Heart left ventricle (tissue), 16 donors: ENCODE measurements at regions of chr3 and their contacts with region 1.

Region 1: GRCh38 chr3:134406331-134407238 is 32.3 kb upstream of the AMOTL2 start:
- DNase-seq: peak; percentile 61 to 75 (median 66)
- ATAC-seq: peak in 3 of 4 donors; percentile 68 to 80 (median 68)
- H3K4me3 ChIP-seq: peak overlapping the region; percentile 20 to 62 (median 51)
- H3K27ac ChIP-seq: peak overlapping the region in 5 of 12 donors; percentile 2 to 42 (median 35)
- H3K4me1 ChIP-seq: peaks cover 0 to 18% (median 11%) of the 10 kb centered on the region in 12 donors
- H3K27me3 ChIP-seq: peaks cover 0 to 20% (median 0%) of the 10 kb centered on the region in 9 donors
- CTCF ChIP-seq: peak in 1 of 12 donors; percentile 1
- POLR2A ChIP-seq: no peak

Region 2: GRCh38 chr3:134449277-134449676 is 42.7 kb after region 1 on chr3:
- intact Hi-C with region 1: loop called in 2 of 10 experiments (anchors 5 kb)
- DNase-seq: peak in 1 of 5 donors; percentile 29
- ATAC-seq: peak in 3 of 4 donors; percentile 31 to 73 (median 61)
- H3K4me3 ChIP-seq: no peak overlapping the region
- H3K27ac ChIP-seq: no peak overlapping the region
- H3K4me1 ChIP-seq: peaks cover 0 to 32% (median 20%) of the 10 kb centered on the region in 12 donors
- H3K27me3 ChIP-seq: peaks cover 0 to 1% (median 0%) of the 10 kb centered on the region in 9 donors
- CTCF ChIP-seq: peak in 9 of 12 donors; percentile 19 to 53 (median 41)
- POLR2A ChIP-seq: no peak

Region 3: DNA sequence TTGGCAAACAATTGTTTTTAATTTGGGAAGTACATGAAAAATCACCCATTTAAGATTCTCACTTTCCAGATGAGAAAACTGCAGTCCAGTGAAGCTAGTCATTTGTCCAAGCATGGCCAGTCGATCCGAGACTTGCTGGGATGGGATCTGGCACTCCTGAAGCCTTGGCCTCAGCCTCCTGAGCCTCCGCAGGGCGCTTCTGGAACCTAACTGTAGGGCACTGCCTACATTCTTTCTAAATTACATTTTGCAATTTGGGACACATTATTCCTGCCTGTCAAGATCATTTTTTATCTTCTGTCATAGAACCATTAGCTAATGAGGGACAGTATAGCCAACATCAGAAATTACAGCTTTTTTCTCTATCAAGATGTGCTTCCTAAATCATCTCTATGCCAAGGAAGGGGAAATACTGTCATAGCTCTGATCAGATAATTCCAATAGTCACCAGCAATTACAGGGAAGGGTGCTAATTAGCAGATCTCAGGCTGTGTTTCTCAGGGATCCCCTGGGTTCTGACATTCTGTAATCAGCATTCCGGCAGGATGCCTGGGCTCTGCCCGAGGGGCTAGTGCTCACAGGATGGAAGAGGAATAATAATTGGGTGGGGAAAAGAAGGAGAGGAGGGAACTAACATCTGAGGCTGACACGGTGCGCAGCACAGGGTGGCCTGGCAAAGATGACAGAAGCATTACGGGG is 50.9 kb after region 1 on chr3:
- intact Hi-C with region 1: loop called in 2 of 10 experiments (anchors 5 kb)
- DNase-seq: no peak
- ATAC-seq: no peak
- H3K4me3 ChIP-seq: no peak overlapping the region
- H3K27ac ChIP-seq: no peak overlapping the region
- H3K4me1 ChIP-seq: peaks cover 0 to 21% (median 13%) of the 10 kb centered on the region in 12 donors
- H3K27me3 ChIP-seq: peaks cover 0 to 7% (median 0%) of the 10 kb centered on the region in 9 donors
- CTCF ChIP-seq: no peak
- POLR2A ChIP-seq: no peak

Region 4: DNA sequence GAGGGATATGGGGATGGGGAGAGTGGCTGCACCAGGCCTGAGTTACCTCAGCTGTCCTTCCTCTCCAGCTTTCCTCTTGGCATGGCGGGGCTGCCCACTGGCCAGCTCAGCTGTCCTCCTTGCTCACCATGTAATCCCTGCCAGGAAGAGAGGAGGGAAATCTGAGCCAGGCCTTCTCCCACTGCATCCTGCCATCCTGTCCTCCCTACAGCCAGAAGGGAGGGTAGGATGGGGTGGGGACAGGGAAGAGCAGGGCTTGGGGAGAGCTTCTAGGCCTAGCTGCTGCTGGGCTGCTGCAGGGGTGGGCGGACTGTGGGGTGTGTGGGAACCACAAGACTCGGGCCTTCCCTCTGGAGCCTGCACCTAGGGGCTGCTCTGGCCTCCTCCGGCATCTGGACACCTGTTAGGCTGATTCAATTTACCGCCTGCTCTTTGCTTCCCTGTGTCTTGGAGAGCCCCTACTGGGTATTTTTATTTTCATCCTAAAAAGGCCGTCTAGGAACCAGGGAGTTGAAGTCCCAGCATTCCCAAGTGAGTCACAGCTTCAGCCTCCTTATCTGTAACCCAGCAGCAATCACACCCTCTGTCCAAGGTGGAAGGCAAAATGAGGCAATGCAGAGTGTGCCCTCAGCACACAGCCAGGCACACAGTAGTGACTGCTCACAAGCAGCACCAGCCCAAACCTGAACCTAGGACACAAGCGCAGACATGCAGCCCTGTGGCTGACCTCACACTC is 257.3 kb after region 1 on chr3:
- intact Hi-C with region 1: no loop called
- DNase-seq: no peak
- ATAC-seq: peak in 3 of 4 donors; percentile 21 to 32 (median 25)
- H3K4me3 ChIP-seq: no peak overlapping the region
- H3K27ac ChIP-seq: peak overlapping the region in 3 of 12 donors; percentile 20 to 39 (median 38)
- H3K4me1 ChIP-seq: peaks cover 0 to 23% (median 0%) of the 10 kb centered on the region in 12 donors
- H3K27me3 ChIP-seq: no peaks in the 10 kb centered on the region
- CTCF ChIP-seq: no peak
- POLR2A ChIP-seq: no peak